SK-N-SH (cell line): ENCODE measurements at regions of chr7 and their contacts with region 1.

Region 1: DNA sequence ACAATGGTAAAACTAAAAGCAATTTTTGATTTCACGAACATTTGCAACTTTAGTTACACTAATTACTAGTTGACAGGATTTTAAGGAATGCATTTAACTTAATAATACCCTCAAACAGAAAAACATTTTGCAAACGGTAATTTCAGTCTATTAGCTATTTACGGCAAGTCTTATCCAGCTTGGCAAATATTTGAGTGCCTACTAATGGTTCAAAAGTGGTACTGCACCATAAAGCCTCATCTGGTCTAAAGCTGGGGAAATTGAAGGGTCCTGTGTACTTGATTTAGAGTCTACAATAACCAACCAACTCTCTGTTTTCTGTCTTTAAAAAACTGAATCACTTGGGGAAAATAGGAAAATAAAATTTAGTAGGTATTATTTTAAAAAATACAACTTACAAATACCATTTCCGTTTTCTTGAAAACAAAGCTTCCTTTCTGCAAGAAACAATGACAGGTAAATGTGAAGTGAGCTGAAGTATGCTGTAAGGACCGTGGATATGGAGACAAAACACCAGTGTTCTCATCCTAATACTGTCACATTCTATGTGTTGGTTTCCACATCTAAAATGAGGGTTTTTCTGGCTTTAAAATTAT is 142.3 kb downstream of the VPS50 start:
- DNase-seq: peak; percentile 32
- H3K4me3 ChIP-seq: peak overlapping the region in 1 of 2 experiments; percentile 35; a peak in 2 of 4 replicates
- H3K27ac ChIP-seq: no peak overlapping the region
- H3K4me1 ChIP-seq: no peaks in the 10 kb centered on the region; a peak in 1 of 4 replicates
- H3K27me3 ChIP-seq: peaks cover 9% of the 10 kb centered on the region
- CTCF ChIP-seq: peak; percentile 95
- EP300 ChIP-seq: no peak
- RAD21 ChIP-seq: peak; percentile 74

Region 2: DNA sequence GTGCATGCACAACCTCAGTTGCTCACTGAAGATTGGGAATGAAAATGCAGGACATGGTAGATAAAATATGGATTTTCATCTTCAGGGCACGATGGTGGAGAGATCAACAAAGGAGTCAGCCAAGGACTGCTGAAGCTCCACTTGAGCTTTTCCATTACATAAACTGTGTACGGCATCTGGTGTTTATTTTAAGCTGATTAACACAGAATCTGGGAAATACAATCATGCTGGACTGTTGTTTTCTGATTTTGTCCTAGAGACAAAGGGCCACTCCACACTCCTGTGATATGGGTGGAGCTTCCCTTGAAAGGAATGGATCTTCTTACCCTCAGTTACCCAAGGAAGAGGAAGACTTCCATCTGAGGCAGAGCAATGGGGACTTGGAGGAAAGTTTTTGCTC is 377.3 kb before region 1 on chr7:
- CTCF ChIA-PET with region 1: no interaction called
- POLR2A ChIA-PET with region 1: no interaction called
- DNase-seq: no peak
- H3K4me3 ChIP-seq: no peak overlapping the region
- H3K27ac ChIP-seq: no peak overlapping the region
- H3K4me1 ChIP-seq: peaks cover 0 to 15% of the 10 kb centered on the region in 2 experiments; a peak in 2 of 4 replicates
- H3K27me3 ChIP-seq: no peaks in the 10 kb centered on the region; the same call in 1 of the 2 replicates
- CTCF ChIP-seq: no peak
- EP300 ChIP-seq: no peak
- RAD21 ChIP-seq: no peak

Region 3: GRCh38 chr7:93245525-93246432 is 128.7 kb before region 1 on chr7:
- CTCF ChIA-PET with region 1: interaction called, 29 read pairs
- POLR2A ChIA-PET with region 1: no interaction called
- DNase-seq: peak; percentile 27
- H3K4me3 ChIP-seq: no peak overlapping the region
- H3K27ac ChIP-seq: no peak overlapping the region
- H3K4me1 ChIP-seq: peaks cover 0 to 3% of the 10 kb centered on the region in 2 experiments; a peak in 1 of 4 replicates
- H3K27me3 ChIP-seq: no peaks in the 10 kb centered on the region
- CTCF ChIP-seq: peak; percentile 90
- EP300 ChIP-seq: no peak
- RAD21 ChIP-seq: peak; percentile 86

Region 4: DNA sequence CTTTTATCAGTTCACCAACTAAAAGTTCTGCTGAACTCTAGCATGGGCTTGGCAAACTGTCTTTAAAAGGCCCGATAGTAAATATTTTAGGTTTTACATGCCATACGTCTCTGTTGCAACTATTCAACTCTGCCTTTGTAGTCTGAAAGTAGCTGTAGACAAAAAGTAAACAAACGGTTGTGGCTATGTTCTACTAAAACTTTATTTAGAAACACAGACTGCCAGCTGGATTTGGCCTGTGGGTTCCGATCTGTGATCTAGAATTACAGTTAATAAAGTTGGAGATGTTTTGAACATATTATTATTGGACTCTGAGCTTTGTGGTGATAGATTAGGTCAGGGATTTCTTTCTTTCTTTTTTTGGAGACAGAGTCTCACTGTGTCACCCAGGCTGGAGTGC is 109.2 kb before region 1 on chr7:
- CTCF ChIA-PET with region 1: interaction called, 10 read pairs
- POLR2A ChIA-PET with region 1: no interaction called
- DNase-seq: no peak
- H3K4me3 ChIP-seq: no peak overlapping the region
- H3K27ac ChIP-seq: no peak overlapping the region
- H3K4me1 ChIP-seq: peaks cover 0 to 2% of the 10 kb centered on the region in 2 experiments; a peak in 2 of 4 replicates
- H3K27me3 ChIP-seq: no peaks in the 10 kb centered on the region
- CTCF ChIP-seq: no peak
- EP300 ChIP-seq: no peak
- RAD21 ChIP-seq: no peak

Region 5: DNA sequence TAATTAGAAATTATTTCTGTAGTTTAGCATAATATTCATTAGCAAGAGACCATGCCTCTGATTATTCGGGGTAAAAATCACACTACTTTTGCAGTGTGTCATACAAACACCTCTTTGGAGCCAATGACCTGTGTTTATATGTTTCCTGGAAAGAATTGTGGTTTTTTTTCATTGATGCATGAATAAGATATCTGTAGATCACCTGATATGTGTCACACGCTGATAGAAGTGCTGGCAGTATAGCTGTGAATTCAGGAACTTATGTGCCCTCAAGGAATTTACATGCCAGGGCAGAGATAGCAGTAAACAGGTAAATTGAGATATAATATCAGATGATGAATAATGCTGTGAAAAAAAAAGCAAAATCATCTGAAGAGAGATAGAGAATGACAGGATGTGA is 24.1 kb before region 1 on chr7:
- CTCF ChIA-PET with region 1: interaction called, 11 read pairs
- POLR2A ChIA-PET with region 1: no interaction called
- DNase-seq: no peak
- H3K4me3 ChIP-seq: no peak overlapping the region
- H3K27ac ChIP-seq: no peak overlapping the region
- H3K4me1 ChIP-seq: no peaks in the 10 kb centered on the region
- H3K27me3 ChIP-seq: no peaks in the 10 kb centered on the region
- CTCF ChIP-seq: no peak
- EP300 ChIP-seq: no peak
- RAD21 ChIP-seq: no peak

Region 6: DNA sequence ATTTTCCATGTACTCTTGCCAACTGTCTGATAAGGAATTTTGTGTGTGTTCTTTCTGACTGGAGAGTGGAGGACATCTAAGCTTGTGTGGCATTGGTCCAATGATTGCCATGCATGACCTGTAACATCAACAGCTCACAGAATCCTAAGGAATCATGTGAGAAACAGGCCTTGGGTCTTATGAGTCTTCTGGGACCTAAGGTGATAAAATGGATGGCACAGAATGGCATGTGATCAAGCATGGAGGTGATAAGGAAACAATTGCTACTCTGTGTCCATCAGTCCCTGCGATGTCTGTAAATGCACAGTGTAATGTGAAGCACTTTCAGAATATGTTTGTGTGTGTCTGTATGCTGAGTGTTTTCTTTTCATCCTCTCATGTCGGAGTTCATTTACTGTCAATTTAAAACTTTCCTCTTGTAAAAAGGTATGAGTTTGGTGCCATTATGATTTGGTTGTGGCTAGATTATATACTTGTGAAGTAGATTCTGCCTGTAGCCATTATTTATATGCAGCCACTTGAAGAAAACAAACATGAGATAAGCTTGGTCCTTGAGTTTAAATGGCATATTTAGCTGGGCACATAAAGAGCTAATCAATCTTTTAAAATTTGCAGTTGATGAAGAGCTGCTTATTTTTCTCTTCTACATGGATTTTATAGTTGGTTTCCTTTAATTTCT is 14.8 kb before region 1 on chr7:
- CTCF ChIA-PET with region 1: interaction called, 19 read pairs
- POLR2A ChIA-PET with region 1: no interaction called
- DNase-seq: no peak
- H3K4me3 ChIP-seq: no peak overlapping the region
- H3K27ac ChIP-seq: no peak overlapping the region
- H3K4me1 ChIP-seq: no peaks in the 10 kb centered on the region
- H3K27me3 ChIP-seq: no peaks in the 10 kb centered on the region
- CTCF ChIP-seq: no peak
- EP300 ChIP-seq: no peak
- RAD21 ChIP-seq: no peak

Region 7: DNA sequence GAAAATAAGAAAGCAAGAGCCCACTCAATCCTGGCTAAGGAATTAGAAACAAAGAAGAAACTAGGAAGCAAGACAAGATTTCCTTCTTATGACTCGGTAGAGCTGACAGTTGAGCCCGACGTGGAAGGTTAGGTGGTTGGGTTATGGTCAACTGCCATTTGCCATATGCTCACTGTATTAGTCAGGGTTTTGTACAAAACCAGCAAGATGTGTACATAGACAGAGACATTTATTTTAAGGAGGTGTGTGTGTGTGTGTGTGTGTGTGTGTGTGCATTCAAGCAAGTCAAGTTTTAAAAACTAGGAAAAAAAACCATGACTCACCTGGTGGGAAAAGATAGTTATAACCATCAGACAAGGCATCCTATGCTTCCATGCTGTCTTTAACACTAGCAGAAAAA is 16.2 kb after region 1 on chr7:
- CTCF ChIA-PET with region 1: interaction called, 12 read pairs
- POLR2A ChIA-PET with region 1: interaction called, 3 read pairs
- DNase-seq: no peak
- H3K4me3 ChIP-seq: no peak overlapping the region
- H3K27ac ChIP-seq: no peak overlapping the region
- H3K4me1 ChIP-seq: no peaks in the 10 kb centered on the region
- H3K27me3 ChIP-seq: peaks cover 3% of the 10 kb centered on the region; the same call in 1 of the 2 replicates
- CTCF ChIP-seq: no peak
- EP300 ChIP-seq: no peak
- RAD21 ChIP-seq: no peak